CD8-positive, alpha-beta T cell (primary cell): ENCODE measurements at regions of chr6 and their contacts with region 1.

Region 1: DNA sequence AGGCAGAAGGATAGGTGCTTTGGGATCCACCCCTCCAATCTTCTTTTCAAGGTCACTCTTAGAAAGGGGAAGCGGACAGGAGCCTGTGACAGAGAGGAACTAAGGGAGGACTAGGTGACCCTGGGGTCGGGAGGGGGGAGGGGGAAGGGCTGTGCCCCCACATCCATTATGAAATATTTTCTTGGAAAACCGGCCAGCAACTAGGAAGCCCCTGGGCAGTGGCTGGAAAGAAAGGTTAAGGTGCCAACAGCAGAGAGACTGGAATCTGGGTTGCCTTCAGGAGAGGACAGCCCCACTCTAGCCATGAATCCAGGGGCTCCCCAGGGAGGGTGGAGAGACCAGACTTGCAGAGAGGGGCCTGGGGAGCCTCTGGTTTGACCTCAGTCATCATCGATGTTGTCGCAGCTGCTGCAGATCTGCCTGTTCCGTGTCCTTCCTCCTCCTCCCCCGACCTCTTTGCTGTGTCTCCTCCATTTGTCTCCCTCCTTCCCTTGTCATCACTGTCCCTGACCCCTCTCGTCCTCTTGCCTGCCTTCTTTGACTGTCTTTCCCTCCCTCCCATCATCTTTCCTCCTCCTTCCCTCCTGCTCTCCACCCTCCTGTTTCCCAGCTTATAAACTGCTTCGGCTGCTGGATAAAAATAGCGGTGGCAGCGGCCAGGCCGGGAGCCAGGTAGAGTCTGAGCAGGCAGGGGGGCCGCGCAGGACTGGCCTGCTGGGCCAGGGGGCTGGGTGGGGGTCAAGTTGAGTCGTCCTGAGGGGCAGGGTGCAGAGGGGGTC is 3.2 kb downstream of the SLC29A1 start:
- DNase-seq: no peak
- ATAC-seq: no peak
- H3K4me3 ChIP-seq: no peak overlapping the region
- H3K4me3 Mint-ChIP-seq: no peak overlapping the region
- H3K27ac ChIP-seq: no peak overlapping the region
- H3K27ac Mint-ChIP-seq: no peak overlapping the region
- H3K4me1 ChIP-seq: peaks cover 18% of the 10 kb centered on the region
- H3K4me1 Mint-ChIP-seq: peaks cover 20% of the 10 kb centered on the region
- H3K27me3 ChIP-seq: no peaks in the 10 kb centered on the region
- H3K27me3 Mint-ChIP-seq: no peaks in the 10 kb centered on the region
- CTCF ChIP-seq: no peak

Region 2: GRCh38 chr6:44237813-44238433 is 11.4 kb after region 1 on chr6:
- CTCF ChIA-PET with region 1: interaction called, 23 read pairs
- POLR2A ChIA-PET with region 1: interaction called, 4 read pairs
- intact Hi-C with region 1: loop called (anchors 1 kb)
- DNase-seq: peak; percentile 62 to 89 (median 77)
- ATAC-seq: peak; percentile 91
- H3K4me3 ChIP-seq: peak overlapping the region; percentile 76 to 98
- H3K4me3 Mint-ChIP-seq: peak overlapping the region; percentile 88
- H3K27ac ChIP-seq: peak overlapping the region; percentile 88 to 95
- H3K27ac Mint-ChIP-seq: peak overlapping the region; percentile 93
- H3K4me1 ChIP-seq: peaks cover 12% of the 10 kb centered on the region
- H3K4me1 Mint-ChIP-seq: peaks cover 11% of the 10 kb centered on the region
- H3K27me3 ChIP-seq: no peaks in the 10 kb centered on the region
- H3K27me3 Mint-ChIP-seq: no peaks in the 10 kb centered on the region
- CTCF ChIP-seq: peak; percentile 93